ENCODE measurements at regions of chr6 and their contacts with region 1.

Region 1: GRCh38 chr6:114167583-114168576 is 174.9 kb downstream of the HS3ST5 start:
- DNase-seq: peak; percentile 99
- ATAC-seq: peak; percentile 87
- H3K4me3 ChIP-seq: peak overlapping the region; percentile 41 to 60 (median 56)
- H3K27ac ChIP-seq: peak overlapping the region; percentile 99
- H3K4me1 ChIP-seq: peaks cover 91% of the 10 kb centered on the region
- H3K27me3 ChIP-seq: no peaks in the 10 kb centered on the region; a peak in 1 of 5 replicates
- CTCF ChIP-seq: 0 out of 2 replicates have a peak, but pooled peaks have one; percentile 7
- EP300 ChIP-seq: peak; percentile 79 to 99
- POLR2A ChIP-seq: peak; percentile 62 to 69
- RAD21 ChIP-seq: 0 out of 2 replicates have a peak, but pooled peaks have one; percentile 35

Region 2: DNA sequence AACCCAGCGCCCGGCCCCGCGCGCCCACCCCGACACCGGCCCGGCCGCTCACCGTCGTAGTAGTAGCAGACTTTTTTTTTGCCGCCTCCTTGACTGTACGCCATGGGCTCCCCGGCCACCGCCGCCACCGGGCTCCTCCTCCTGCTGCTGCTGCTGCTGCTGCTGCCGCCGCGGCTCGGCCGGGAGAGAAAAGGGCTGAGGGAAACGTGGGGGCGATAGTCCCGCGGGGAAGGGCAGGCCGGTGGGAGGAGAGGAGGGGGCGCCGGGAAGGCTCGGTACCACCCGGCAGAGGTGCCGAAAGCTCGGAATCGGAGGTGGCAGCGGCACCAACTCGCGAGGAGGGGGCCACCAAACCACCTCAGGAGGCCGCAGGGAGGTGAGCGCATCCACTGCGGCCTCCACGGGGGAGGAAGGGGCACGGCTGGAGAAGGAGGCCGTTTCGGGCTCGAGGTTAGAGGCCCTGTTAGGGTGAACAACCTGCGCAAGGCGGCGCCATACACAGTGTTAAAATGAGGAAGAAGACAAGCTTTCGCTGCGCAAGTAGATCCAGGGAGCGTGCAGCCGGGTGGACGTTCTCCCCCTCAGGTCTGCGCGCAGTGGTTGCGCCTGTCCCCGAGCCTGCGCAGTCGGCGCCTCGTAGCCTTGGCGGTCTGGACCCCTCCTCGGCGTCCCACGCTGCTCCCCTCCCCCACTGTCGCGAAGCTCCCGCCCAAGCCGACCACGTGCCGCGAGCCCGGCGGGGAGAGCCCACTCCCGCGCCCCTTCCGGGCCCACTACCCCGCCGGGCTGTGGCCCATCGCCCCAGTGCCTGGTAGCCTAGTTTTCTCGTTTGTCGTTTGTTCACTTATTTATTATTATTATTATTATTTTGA is 196.8 kb before region 1 on chr6 and contains the start of gene HDAC2:
- CTCF ChIA-PET with region 1: no interaction called
- POLR2A ChIA-PET with region 1: interaction called, 7 read pairs
- in situ Hi-C with region 1: no loop called
- intact Hi-C with region 1: loop called (anchors 10 kb)
- DNase-seq: peak; percentile 67
- ATAC-seq: peak; percentile 84
- H3K4me3 ChIP-seq: peak within 1 kb of the TSS; percentile 85 to 88 (median 86)
- H3K27ac ChIP-seq: peak within 1 kb of the TSS; percentile 93
- H3K4me1 ChIP-seq: peaks cover 50% of the 10 kb centered on the region
- H3K27me3 ChIP-seq: no peaks in the 10 kb centered on the region; a peak in 1 of 5 replicates
- CTCF ChIP-seq: peak; percentile 34
- EP300 ChIP-seq: peak in 1 of 2 experiments; percentile 40; a peak in 1 of 4 replicates
- POLR2A ChIP-seq: peak; percentile 73 to 84
- RAD21 ChIP-seq: no peak; the same call in 1 of the 2 replicates
- total RNA-seq, gene HDAC2: 99.6 and 170 TPM in 2 replicates

Region 3: DNA sequence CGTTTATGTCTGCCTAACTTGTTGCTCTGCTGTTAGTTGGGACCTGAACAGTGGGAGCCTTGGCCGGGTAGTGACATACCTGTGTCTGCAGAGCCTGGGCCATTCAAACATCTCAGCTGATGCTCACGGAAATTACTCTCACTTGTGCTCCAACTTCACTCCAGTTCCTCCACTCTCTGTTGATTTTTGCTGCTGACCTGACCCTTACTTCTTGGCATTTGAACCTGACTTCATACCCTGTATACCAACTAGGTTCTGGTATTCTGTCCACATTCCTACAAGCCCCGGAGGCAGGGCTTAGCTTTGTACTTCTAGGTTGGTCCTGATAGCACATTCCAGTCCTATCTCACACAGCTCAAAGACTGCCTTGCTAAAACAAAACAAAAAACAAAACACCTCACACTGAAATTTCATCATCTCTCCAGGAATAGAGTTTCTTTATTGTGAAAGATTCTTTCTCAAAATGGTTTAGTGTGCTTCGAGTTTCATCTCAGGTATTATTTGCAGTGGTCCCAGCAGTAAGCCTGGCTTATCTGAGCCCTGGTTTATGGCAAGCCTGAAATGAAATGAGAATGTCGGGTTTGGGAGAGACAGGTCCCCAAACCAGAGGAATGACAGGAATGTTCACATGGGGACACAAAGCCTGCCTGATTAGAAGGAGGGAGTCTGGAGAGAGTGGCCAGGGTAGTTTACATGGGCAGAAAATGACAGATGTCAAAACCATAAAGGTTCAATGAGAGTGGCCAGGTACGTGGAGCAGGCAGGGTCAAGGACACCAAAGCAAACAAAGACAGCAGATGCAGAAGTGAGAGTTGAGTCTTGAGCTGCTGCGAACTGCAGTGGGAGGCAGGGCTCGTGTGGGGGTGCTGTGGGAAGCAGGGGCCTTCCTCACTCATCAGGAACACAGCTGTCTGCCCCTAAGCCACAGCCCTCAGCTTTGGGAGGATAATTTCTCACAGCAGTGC is 22.7 kb before region 1 on chr6:
- CTCF ChIA-PET with region 1: no interaction called
- POLR2A ChIA-PET with region 1: interaction called, 72 read pairs
- in situ Hi-C with region 1: no loop called
- intact Hi-C with region 1: loop called (anchors 1 kb)
- DNase-seq: peak; percentile 98
- ATAC-seq: peak; percentile 99
- H3K4me3 ChIP-seq: peak overlapping the region; percentile 30 to 53 (median 44); a peak in 5 of 6 replicates
- H3K27ac ChIP-seq: peak overlapping the region; percentile 82
- H3K4me1 ChIP-seq: peaks cover 54% of the 10 kb centered on the region
- H3K27me3 ChIP-seq: no peaks in the 10 kb centered on the region
- CTCF ChIP-seq: peak; percentile 48
- EP300 ChIP-seq: peak; percentile 38 to 88; a peak in 3 of 4 replicates
- POLR2A ChIP-seq: no peak; a peak in 1 of 4 replicates
- RAD21 ChIP-seq: no peak

Region 4: DNA sequence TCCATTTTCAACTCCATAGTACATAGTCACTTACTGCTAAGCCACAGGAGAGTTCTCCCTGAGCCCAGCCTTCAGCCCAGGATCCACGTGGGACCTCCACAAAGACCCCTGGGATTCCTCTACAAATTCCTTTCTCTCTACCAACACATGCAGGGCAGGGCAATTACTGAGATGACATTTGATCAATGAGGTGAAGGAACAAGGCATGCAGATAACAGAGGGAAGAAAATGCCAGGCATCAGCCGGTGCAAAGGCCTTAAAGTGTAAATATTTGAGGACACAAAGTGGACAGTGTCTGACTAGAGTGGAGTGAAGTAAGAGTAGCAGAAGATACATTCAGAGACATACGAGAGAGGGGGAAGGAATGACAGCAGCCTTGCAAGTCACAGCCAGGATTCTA is 104.7 kb after region 1 on chr6:
- CTCF ChIA-PET with region 1: no interaction called
- POLR2A ChIA-PET with region 1: no interaction called
- in situ Hi-C with region 1: loop called (anchors 5 kb)
- intact Hi-C with region 1: loop called (anchors 5 kb)
- DNase-seq: peak; percentile 90
- ATAC-seq: peak; percentile 100
- H3K4me3 ChIP-seq: no peak overlapping the region
- H3K27ac ChIP-seq: peak overlapping the region; percentile 37
- H3K4me1 ChIP-seq: peaks cover 32% of the 10 kb centered on the region
- H3K27me3 ChIP-seq: no peaks in the 10 kb centered on the region
- CTCF ChIP-seq: no peak
- EP300 ChIP-seq: peak in 1 of 2 experiments; percentile 80; a peak in 2 of 4 replicates
- POLR2A ChIP-seq: no peak
- RAD21 ChIP-seq: no peak

Region 5: GRCh38 chr6:114327074-114327473 is 159.2 kb after region 1 on chr6:
- CTCF ChIA-PET with region 1: no interaction called
- POLR2A ChIA-PET with region 1: no interaction called
- in situ Hi-C with region 1: no loop called
- intact Hi-C with region 1: no loop called
- DNase-seq: peak; percentile 2
- ATAC-seq: no peak
- H3K4me3 ChIP-seq: no peak overlapping the region
- H3K27ac ChIP-seq: no peak overlapping the region
- H3K4me1 ChIP-seq: no peaks in the 10 kb centered on the region
- H3K27me3 ChIP-seq: no peaks in the 10 kb centered on the region
- CTCF ChIP-seq: no peak
- EP300 ChIP-seq: no peak
- POLR2A ChIP-seq: no peak
- RAD21 ChIP-seq: no peak

Region 6: DNA sequence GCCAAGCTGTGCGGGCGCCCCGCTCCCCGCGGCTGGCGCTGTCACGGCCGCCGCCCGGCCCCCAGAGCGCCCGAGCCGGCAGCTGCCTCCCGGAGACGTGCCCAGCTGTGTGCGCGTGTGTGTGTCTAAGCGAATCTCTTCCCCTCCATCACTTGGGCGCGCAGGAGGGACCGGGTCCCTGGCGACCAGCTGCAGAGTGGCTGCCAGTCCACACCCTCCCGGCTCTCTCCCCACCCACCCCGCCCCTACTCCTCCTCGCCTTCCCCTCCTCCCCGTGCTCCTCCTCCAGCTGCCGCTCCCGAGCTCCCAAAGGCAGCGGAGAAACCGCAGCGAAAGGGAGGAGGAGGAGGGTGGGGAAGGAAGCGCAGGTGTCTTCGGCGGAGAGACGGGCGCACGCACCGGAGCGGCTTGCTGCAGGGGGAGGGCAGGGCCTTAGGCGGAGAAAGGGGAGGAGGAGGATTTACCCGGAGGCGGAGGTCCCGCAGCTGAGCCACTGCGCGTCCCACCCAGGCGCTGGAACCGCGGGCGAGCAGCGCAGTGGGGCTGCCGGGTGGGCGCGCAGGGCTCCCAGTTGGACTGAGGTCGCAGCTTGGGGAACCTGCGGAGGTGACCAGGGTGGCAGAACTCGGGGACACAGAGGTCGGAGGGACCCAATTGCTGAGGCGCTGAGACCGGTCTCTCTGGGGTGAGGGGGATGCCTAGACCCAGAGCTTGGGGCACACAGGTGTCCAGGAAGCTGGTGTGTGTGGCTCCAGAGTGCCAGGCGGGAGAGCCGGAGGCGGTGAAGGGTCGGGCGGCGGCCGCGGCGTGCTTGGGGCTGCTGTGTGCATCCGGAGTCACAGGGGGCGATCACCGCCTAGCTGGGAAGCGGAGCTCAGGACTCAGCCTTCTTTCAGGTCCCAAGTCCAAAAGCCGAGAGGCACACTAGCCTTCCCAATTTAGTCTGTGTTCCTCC is 175.2 kb after region 1 on chr6 and contains the start of gene HS3ST5:
- CTCF ChIA-PET with region 1: no interaction called
- POLR2A ChIA-PET with region 1: interaction called, 11 read pairs
- in situ Hi-C with region 1: no loop called
- intact Hi-C with region 1: loop called (anchors 5 kb)
- DNase-seq: peak; percentile 57
- ATAC-seq: peak; percentile 94
- H3K4me3 ChIP-seq: peak within 1 kb of the TSS; percentile 61 to 90 (median 90)
- H3K27ac ChIP-seq: peak within 1 kb of the TSS; percentile 52
- H3K4me1 ChIP-seq: peaks cover 33% of the 10 kb centered on the region
- H3K27me3 ChIP-seq: no peaks in the 10 kb centered on the region; a peak in 2 of 5 replicates
- CTCF ChIP-seq: peak; percentile 89
- EP300 ChIP-seq: no peak
- POLR2A ChIP-seq: peak in 1 of 2 experiments; percentile 47; a peak in 2 of 4 replicates
- RAD21 ChIP-seq: peak; percentile 69
- total RNA-seq, gene HS3ST5: 1.0 and 1.1 TPM in 2 replicates